ENCODE measurements at regions of chr6 and their contacts with region 1.

Region 1: DNA sequence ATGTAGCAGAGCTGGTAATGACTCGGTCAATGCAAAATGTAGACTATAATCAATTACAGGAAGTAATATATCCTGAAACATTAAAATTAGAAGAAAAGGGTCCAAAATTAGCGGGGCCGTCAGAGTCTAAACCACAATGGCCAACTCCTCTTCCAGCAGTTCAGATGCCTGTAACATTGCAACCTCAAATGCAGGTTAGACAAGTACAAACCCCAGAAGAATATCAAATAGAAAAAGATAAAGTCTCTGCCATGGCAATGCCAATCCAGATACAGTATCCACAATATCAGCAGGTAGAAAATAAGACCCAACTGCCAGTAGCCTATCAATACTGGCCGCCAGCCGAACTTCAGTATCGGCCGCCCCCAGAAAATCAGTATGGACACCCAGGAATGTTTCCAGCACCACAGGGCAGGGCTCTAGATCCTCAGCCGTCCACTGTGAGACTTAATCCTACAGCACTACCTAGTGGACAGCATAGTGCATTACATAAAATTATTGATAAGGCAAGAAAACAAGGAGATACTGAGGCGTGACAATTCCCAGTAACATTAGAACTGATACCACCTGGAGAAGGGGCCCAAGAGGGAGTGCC is 158.4 kb downstream of the GPX5 start:
- DNase-seq: peak in 1 of 10 donors; percentile 3

Region 2: GRCh38 chr6:28399350-28400121 is 284.5 kb before region 1 on chr6 and contains the start of gene ZSCAN12:
- intact Hi-C with region 1: loop called (anchors 10 kb)
- DNase-seq: peak; percentile 76 to 97 (median 86)

Region 3: GRCh38 chr6:28615955-28616747 is 67.9 kb before region 1 on chr6:
- intact Hi-C with region 1: no loop called
- DNase-seq: no peak

Region 4: GRCh38 chr6:29016559-29017427 is 332.8 kb after region 1 on chr6:
- intact Hi-C with region 1: loop called (anchors 1 kb)
- DNase-seq: peak; percentile 39 to 93 (median 77)

Measured in posterior cingulate gyrus (tissue), 11 donors.